ENCODE measurements at regions of chr20 and their contacts with region 1.

Region 1: GRCh38 chr20:9978397-9979004 is 56.3 kb upstream of the ANKEF1 start:
- DNase-seq: peak in 3 of 10 donors; percentile 44 to 66 (median 55)
- H3K4me3 ChIP-seq: peak overlapping the region in 16 of 59 donors; percentile 4 to 39 (median 15)
- H3K27ac ChIP-seq: peak overlapping the region in 12 of 59 donors; percentile 0 to 58 (median 25)
- H3K27me3 ChIP-seq: no peaks in the 10 kb centered on the region
- CTCF ChIP-seq: peak; percentile 59 to 98 (median 87)

Region 2: DNA sequence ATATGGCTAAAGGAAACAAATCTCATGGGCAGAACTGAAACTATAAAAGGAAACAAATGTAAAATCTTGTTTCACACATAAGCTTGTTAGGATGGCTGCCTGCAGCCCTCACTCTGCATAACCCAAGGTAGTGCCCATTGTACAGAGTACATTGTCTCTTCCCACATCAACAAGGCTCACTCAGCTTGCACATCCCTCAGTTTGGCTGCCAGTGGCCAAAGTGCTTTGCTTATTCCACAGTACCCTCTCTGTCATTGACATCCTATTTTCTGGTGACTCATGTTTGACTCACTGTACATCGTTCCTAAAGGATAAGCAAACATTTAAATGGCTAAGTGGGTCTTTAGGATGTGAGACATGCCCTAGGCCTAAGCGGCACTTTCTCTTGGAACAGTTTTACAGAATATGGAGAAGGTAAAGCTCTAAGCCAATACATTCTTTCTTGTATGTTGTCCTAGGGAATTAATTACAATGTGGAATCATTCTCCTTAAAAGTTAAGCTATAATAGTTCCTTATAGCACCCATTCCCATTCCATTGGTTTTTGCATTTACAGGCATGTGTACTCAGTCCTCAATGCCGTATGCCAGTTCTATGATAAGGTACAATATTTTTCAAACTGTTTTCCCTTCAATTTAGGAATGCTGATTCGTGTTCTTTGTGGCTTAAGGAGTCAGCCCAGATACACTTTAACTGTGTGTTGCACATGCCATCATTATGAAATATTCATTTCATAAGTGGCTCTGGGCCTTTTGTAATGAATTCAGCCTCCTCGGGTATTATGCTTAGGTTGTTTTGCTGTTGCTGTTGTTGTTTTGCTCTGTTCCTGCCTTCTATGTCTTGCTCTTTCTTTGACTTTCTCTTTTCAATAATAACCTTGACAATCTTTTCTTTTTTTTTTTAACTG is 61.8 kb after region 1 on chr20:
- intact Hi-C with region 1: no loop called
- DNase-seq: no peak
- H3K4me3 ChIP-seq: no peak overlapping the region
- H3K27ac ChIP-seq: no peak overlapping the region
- H3K27me3 ChIP-seq: no peaks in the 10 kb centered on the region
- CTCF ChIP-seq: no peak

Region 3: DNA sequence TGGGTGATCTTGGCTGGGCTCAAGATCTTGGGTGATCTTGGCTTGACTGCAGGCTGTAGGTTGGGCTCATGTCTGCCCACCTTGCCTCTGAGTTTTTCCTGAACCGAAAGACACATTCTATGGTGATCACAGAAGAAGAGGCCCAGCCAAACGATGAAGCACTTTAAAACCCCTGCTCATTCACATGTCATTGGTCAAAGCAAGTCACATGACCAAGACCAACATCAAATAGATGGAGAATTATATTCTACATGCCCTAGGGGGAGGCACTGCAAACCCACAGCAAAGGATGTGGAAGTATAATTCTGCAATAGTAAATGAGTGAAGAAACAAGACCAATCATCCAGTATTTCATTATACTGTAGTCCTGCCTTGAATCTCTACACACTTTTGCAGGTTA is 164.1 kb after region 1 on chr20:
- intact Hi-C with region 1: no loop called
- DNase-seq: no peak
- H3K4me3 ChIP-seq: no peak overlapping the region
- H3K27ac ChIP-seq: no peak overlapping the region
- H3K27me3 ChIP-seq: no peaks in the 10 kb centered on the region
- CTCF ChIP-seq: no peak

Region 4: GRCh38 chr20:10427060-10427692 is 448.7 kb after region 1 on chr20:
- intact Hi-C with region 1: loop called (anchors 2 to 5 kb)
- DNase-seq: peak; percentile 44 to 81 (median 64)
- H3K4me3 ChIP-seq: no peak overlapping the region
- H3K27ac ChIP-seq: peak overlapping the region in 3 of 59 donors; percentile 6 to 23 (median 10)
- H3K27me3 ChIP-seq: no peaks in the 10 kb centered on the region
- CTCF ChIP-seq: peak; percentile 61 to 86 (median 76)